HepG2 (cell line): ENCODE measurements at regions of chr17 and their contacts with region 1.

Region 1: DNA sequence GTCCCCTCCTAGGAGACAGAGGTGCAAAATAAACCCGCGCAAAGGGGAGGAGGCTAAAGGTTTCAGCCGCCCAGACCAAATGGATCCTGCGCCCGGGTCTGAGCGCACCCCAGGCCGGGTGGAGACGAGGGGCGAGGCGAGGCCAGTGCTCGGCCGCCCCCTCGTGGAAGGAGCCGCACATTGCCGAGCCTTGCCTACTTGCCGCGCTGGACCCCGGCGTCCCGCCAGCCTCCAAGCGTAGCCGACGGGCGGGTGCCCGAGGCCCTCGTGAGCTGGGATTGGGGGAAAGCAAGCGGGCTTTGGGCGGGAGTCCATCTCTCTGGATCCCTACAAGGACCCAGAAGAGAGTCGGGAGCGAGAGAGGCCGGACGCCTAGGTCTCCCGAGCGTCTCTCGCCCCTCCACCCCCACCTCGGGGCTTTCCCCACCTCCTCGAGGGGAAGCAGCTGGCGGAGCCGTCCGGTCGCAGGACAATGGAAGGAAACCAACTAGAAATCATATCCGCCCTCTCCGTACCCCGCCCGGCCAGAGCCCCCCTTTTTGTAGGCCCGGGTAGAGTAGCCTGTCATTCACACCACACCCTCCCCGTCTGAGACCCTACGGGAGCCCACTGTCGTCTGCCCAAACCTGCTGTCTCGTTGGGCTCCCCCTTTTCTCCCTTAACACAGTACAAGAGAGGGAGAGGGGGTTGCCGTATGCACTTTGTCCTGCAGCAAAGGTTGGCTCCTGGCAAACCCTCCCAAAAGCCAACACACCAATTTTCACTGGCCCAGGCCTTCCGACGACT is 664 bp upstream of the BCL6B start:
- DNase-seq: no peak
- ATAC-seq: peak; percentile 85
- H3K4me3 ChIP-seq: peak overlapping the region; percentile 58 to 73 (median 71)
- H3K27ac ChIP-seq: no peak overlapping the region
- H3K4me1 ChIP-seq: peaks cover 55% of the 10 kb centered on the region
- H3K27me3 ChIP-seq: peaks cover 0 to 7% of the 10 kb centered on the region in 2 experiments; a peak in 4 of 5 replicates
- CTCF ChIP-seq: peak; percentile 97
- EP300 ChIP-seq: no peak
- POLR2A ChIP-seq: no peak
- RAD21 ChIP-seq: peak; percentile 94

Region 2: GRCh38 chr17:6843241-6843880 is 178.8 kb before region 1 on chr17:
- CTCF ChIA-PET with region 1: interaction called, 6 read pairs
- POLR2A ChIA-PET with region 1: no interaction called
- in situ Hi-C with region 1: no loop called
- intact Hi-C with region 1: loop called (anchors 10 kb)
- DNase-seq: peak; percentile 54
- ATAC-seq: no peak
- H3K4me3 ChIP-seq: no peak overlapping the region
- H3K27ac ChIP-seq: no peak overlapping the region
- H3K4me1 ChIP-seq: peaks cover 8% of the 10 kb centered on the region; the same call in 1 of the 2 replicates
- H3K27me3 ChIP-seq: peaks cover 0 to 1% of the 10 kb centered on the region in 2 experiments; a peak in 1 of 5 replicates
- CTCF ChIP-seq: peak; percentile 54
- EP300 ChIP-seq: no peak
- POLR2A ChIP-seq: no peak
- RAD21 ChIP-seq: no peak

Region 3: DNA sequence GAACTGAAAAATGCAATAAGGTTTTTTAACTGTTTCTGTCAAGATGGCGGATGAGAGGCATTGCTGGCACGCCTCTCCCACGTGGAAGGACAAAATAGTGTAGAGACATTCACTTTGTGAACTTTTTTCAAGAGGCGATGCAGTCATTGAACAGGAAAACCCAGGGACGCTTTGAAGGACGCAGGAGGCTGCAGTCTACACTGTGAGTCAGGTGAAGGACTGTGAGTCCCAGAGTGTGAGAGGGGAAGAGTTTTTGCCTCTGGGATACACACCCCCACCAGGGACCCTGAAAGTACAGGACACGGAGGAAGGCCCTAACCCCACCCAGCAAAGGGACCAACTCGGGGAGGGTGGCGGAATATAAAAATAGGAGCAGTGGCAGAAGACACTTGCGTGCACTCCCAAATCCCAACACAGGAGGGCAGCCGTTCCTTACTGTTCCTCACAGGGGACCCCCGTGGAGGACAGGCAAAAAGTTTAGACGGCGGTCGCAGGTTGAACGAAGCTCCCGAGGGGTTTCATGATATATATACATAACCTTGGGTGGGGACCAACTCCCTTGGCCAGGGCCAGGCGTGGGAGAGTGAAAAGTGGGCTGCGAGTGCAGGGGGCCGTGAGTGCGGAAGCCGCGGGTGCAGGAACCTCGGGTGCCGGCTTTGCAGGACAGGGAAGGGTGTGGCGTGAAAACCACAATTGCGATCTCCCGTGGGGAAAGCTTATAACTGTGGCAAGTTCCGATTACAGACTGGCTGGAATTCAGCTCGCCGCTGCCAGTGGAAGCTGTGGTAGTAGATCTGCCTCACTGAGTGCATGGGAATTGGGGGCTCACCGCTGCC is 108.4 kb before region 1 on chr17:
- CTCF ChIA-PET with region 1: interaction called, 23 read pairs
- POLR2A ChIA-PET with region 1: no interaction called
- in situ Hi-C with region 1: no loop called
- intact Hi-C with region 1: loop called (anchors 5 kb)
- DNase-seq: peak; percentile 18
- ATAC-seq: peak; percentile 66
- H3K4me3 ChIP-seq: no peak overlapping the region
- H3K27ac ChIP-seq: no peak overlapping the region
- H3K4me1 ChIP-seq: no peaks in the 10 kb centered on the region
- H3K27me3 ChIP-seq: no peaks in the 10 kb centered on the region
- CTCF ChIP-seq: peak; percentile 62
- EP300 ChIP-seq: no peak
- POLR2A ChIP-seq: no peak
- RAD21 ChIP-seq: no peak

Region 4: GRCh38 chr17:7035591-7036368 is 13.6 kb after region 1 on chr17 and contains the start of gene SLC16A13:
- CTCF ChIA-PET with region 1: no interaction called
- POLR2A ChIA-PET with region 1: interaction called, 20 read pairs
- in situ Hi-C with region 1: no loop called
- intact Hi-C with region 1: no loop called
- DNase-seq: peak; percentile 97
- ATAC-seq: peak; percentile 81
- H3K4me3 ChIP-seq: peak within 1 kb of the TSS; percentile 75 to 97 (median 94)
- H3K27ac ChIP-seq: peak within 1 kb of the TSS; percentile 90
- H3K4me1 ChIP-seq: peaks cover 41% of the 10 kb centered on the region
- H3K27me3 ChIP-seq: no peaks in the 10 kb centered on the region; a peak in 2 of 5 replicates
- CTCF ChIP-seq: no peak; the same call in 1 of the 2 replicates
- EP300 ChIP-seq: no peak
- POLR2A ChIP-seq: peak; percentile 78 to 93
- RAD21 ChIP-seq: no peak
- total RNA-seq, gene SLC16A13: 1.9 and 3.0 TPM in 2 replicates